Left cardiac atrium (tissue), 4 donors: ENCODE measurements at regions of chr12 and their contacts with region 1.

Region 1: GRCh38 chr12:93064630-93065029 is 135.5 kb upstream of the EEA1 start:
- DNase-seq: no peak
- ATAC-seq: no peak

Region 2: GRCh38 chr12:92977326-92977725 is 87.3 kb before region 1 on chr12:
- intact Hi-C with region 1: no loop called
- DNase-seq: no peak
- ATAC-seq: peak in 1 of 2 donors; percentile 43

Region 3: GRCh38 chr12:93109551-93110203 is 45.0 kb after region 1 on chr12:
- intact Hi-C with region 1: loop called in 1 of 2 experiments (anchors 5 kb)
- DNase-seq: no peak
- ATAC-seq: no peak

Region 4: GRCh38 chr12:93183940-93184671 is 119.5 kb after region 1 on chr12:
- intact Hi-C with region 1: no loop called
- DNase-seq: no peak
- ATAC-seq: peak; percentile 78 to 82